CD4-positive, alpha-beta memory T cell (primary cell): ENCODE measurements at regions of chr6 and their contacts with region 1.

Region 1: GRCh38 chr6:141677598-141678211 is 455.0 kb upstream of the GJE1 start:
- DNase-seq: peak in 4 of 5 donors; percentile 10 to 24 (median 19)
- H3K4me3 ChIP-seq: no peak overlapping the region
- H3K4me3 Mint-ChIP-seq: no peak overlapping the region
- H3K27ac ChIP-seq: no peak overlapping the region
- H3K27ac Mint-ChIP-seq: no peak overlapping the region
- H3K4me1 ChIP-seq: no peaks in the 10 kb centered on the region
- H3K4me1 Mint-ChIP-seq: peaks cover 0 to 4% (median 2%) of the 10 kb centered on the region in 4 donors
- H3K27me3 ChIP-seq: no peaks in the 10 kb centered on the region
- H3K27me3 Mint-ChIP-seq: no peaks in the 10 kb centered on the region

Region 2: DNA sequence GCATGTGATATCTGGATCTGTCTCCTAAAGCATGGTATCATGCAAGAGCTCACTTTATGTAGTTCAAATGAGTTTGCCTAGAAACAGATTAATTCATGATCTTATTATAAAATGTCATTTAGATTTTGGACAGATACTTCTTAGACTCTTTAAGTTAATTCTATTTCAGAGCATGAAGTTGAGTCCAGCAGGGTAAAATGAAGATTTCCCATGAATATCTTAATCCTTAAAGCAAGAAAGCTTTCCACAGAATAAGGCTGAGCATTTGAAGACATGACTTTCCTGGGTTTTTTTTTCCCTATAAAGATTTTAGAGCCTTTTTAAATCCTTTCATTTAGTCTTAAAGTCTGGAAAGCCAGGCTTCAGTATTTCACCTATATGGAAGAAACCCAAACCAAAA is 101.0 kb before region 1 on chr6:
- CTCF ChIA-PET with region 1: no interaction called
- POLR2A ChIA-PET with region 1: no interaction called
- intact Hi-C with region 1: no loop called
- DNase-seq: no peak
- H3K4me3 ChIP-seq: no peak overlapping the region
- H3K4me3 Mint-ChIP-seq: no peak overlapping the region
- H3K27ac ChIP-seq: no peak overlapping the region
- H3K27ac Mint-ChIP-seq: no peak overlapping the region
- H3K4me1 ChIP-seq: no peaks in the 10 kb centered on the region
- H3K4me1 Mint-ChIP-seq: no peaks in the 10 kb centered on the region
- H3K27me3 ChIP-seq: no peaks in the 10 kb centered on the region
- H3K27me3 Mint-ChIP-seq: peaks cover 0 to 2% of the 10 kb centered on the region in 2 donors

Region 3: GRCh38 chr6:141848029-141848890 is 170.6 kb after region 1 on chr6:
- CTCF ChIA-PET with region 1: no interaction called
- POLR2A ChIA-PET with region 1: no interaction called
- intact Hi-C with region 1: loop called (anchors 5 kb)
- DNase-seq: peak; percentile 49 to 73 (median 59)
- H3K4me3 ChIP-seq: no peak overlapping the region
- H3K4me3 Mint-ChIP-seq: peak overlapping the region in 7 of 8 donors; percentile 29 to 78 (median 63)
- H3K27ac ChIP-seq: no peak overlapping the region
- H3K27ac Mint-ChIP-seq: peak overlapping the region; percentile 76 to 90 (median 79)
- H3K4me1 ChIP-seq: peaks cover 37% of the 10 kb centered on the region
- H3K4me1 Mint-ChIP-seq: peaks cover 27 to 54% (median 40%) of the 10 kb centered on the region in 4 donors
- H3K27me3 ChIP-seq: no peaks in the 10 kb centered on the region
- H3K27me3 Mint-ChIP-seq: no peaks in the 10 kb centered on the region

Region 4: DNA sequence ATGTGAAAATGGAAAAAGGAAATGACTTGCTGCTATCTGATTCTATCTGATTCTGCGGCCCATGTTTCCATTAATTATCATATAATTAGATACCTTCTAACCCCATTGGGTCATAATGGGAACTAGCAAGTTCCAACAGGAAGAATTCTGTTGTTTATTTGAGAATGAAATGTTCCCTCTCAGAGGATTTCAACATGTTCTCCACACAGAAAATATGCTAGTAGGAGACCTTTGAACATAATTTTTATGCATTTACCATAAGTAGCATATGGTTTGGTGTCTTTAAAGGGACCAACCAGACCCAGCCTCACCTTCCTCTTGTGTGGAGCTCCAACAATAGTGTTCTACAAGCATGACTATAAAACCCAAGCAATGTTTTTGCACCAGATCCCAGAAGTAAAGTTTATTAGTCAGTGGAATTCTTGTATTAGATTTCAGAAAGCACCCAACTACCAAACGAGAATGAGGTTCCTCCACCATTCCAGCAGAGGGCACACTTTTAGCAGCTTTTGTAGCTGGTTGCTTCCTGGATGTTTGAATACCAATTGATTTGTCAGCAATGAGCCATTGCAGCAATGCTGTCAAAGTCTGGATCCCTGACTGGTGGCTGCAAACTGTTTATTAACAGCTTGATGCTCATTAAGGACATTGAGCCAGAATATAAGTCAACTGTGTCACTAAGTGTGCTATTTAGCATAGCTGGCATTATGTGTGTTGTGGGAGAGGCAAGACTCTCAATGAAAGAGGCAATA is 311.4 kb after region 1 on chr6:
- CTCF ChIA-PET with region 1: no interaction called
- POLR2A ChIA-PET with region 1: no interaction called
- intact Hi-C with region 1: loop called (anchors 1 kb)
- DNase-seq: peak; percentile 21 to 33 (median 26)
- H3K4me3 ChIP-seq: no peak overlapping the region
- H3K4me3 Mint-ChIP-seq: no peak overlapping the region
- H3K27ac ChIP-seq: no peak overlapping the region
- H3K27ac Mint-ChIP-seq: no peak overlapping the region
- H3K4me1 ChIP-seq: no peaks in the 10 kb centered on the region
- H3K4me1 Mint-ChIP-seq: peaks cover 0 to 6% (median 4%) of the 10 kb centered on the region in 4 donors
- H3K27me3 ChIP-seq: no peaks in the 10 kb centered on the region
- H3K27me3 Mint-ChIP-seq: peaks cover 1 to 4% of the 10 kb centered on the region in 2 donors

Region 5: GRCh38 chr6:142045380-142046278 is 367.9 kb after region 1 on chr6:
- CTCF ChIA-PET with region 1: no interaction called
- POLR2A ChIA-PET with region 1: no interaction called
- intact Hi-C with region 1: loop called (anchors 1 kb)
- DNase-seq: no peak
- H3K4me3 ChIP-seq: no peak overlapping the region
- H3K4me3 Mint-ChIP-seq: no peak overlapping the region
- H3K27ac ChIP-seq: no peak overlapping the region
- H3K27ac Mint-ChIP-seq: no peak overlapping the region
- H3K4me1 ChIP-seq: no peaks in the 10 kb centered on the region
- H3K4me1 Mint-ChIP-seq: no peaks in the 10 kb centered on the region
- H3K27me3 ChIP-seq: no peaks in the 10 kb centered on the region
- H3K27me3 Mint-ChIP-seq: peaks cover 4 to 7% of the 10 kb centered on the region in 2 donors

Region 6: DNA sequence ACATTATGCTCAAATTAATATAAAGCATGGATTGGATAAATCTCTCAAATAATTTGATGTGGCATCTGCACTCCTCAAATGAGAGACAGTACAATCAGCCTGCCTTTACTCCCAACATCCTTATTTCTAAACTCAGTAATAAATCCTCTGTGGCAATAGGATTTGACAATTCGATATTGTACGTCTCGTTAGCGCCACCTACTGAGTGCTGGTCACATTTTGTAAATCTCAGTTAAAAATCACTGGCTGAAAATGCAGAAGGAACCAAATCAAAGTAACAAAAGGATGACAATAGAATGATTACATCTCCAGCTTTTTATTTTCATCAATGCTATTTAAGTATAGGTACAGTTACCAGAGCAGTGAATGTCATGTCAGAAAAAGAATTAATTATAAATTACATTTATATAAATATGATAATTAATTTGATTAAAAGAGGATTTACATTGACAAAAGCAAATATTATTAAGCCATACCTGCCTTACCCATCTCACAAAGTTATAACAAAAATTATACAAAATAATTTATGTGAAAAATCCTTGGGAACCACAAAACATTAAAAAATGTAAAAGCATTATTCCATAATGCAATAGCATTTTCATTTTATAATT is 434.9 kb after region 1 on chr6:
- CTCF ChIA-PET with region 1: interaction called, 8 read pairs
- POLR2A ChIA-PET with region 1: no interaction called
- intact Hi-C with region 1: loop called (anchors 1 kb)
- DNase-seq: peak; percentile 51 to 56 (median 55)
- H3K4me3 ChIP-seq: no peak overlapping the region
- H3K4me3 Mint-ChIP-seq: no peak overlapping the region
- H3K27ac ChIP-seq: no peak overlapping the region
- H3K27ac Mint-ChIP-seq: no peak overlapping the region
- H3K4me1 ChIP-seq: no peaks in the 10 kb centered on the region
- H3K4me1 Mint-ChIP-seq: peaks cover 0 to 2% (median 0%) of the 10 kb centered on the region in 4 donors
- H3K27me3 ChIP-seq: no peaks in the 10 kb centered on the region
- H3K27me3 Mint-ChIP-seq: peaks cover 2% of the 10 kb centered on the region in 2 donors